H1 (cell line): ENCODE measurements at regions of chr1 and their contacts with region 1.

Region 1: GRCh38 chr1:109773146-109773899 is 9.6 kb upstream of the EPS8L3 start:
- DNase-seq: peak; percentile 34 to 66
- H3K4me3 ChIP-seq: no peak overlapping the region
- H3K27ac ChIP-seq: no peak overlapping the region
- H3K4me1 ChIP-seq: peaks cover 0 to 4% (median 0%) of the 10 kb centered on the region in 4 experiments; a peak in 1 of 7 replicates
- H3K27me3 ChIP-seq: no peaks in the 10 kb centered on the region; a peak in 2 of 7 replicates
- CTCF ChIP-seq: peak; percentile 93 to 97 (median 95)
- EP300 ChIP-seq: no peak
- POLR2A ChIP-seq: no peak
- RAD21 ChIP-seq: peak; percentile 97

Region 2: GRCh38 chr1:109655601-109656519 is 117.5 kb before region 1 on chr1 and contains the start of gene GSTM4:
- CTCF ChIA-PET with region 1: interaction called, 51 read pairs
- POLR2A ChIA-PET with region 1: no interaction called
- DNase-seq: peak; percentile 44 to 86
- H3K4me3 ChIP-seq: peak within 1 kb of the TSS; percentile 59 to 74 (median 66)
- H3K27ac ChIP-seq: no peak within 1 kb of the TSS
- H3K4me1 ChIP-seq: 0 out of 7 replicates have a peak, but pooled peaks cover 0 to 3% (median 0%) of the 10 kb centered on the region in 4 experiments
- H3K27me3 ChIP-seq: peaks cover 0 to 5% (median 4%) of the 10 kb centered on the region in 4 experiments; a peak in 6 of 7 replicates
- CTCF ChIP-seq: no peak; a peak in 1 of 4 replicates
- EP300 ChIP-seq: 0 out of 3 replicates have a peak, but pooled peaks of 1 of the 2 experiments have one; percentile 22
- POLR2A ChIP-seq: peak in 1 of 2 experiments; percentile 32; a peak in 1 of 3 replicates
- RAD21 ChIP-seq: no peak; a peak in 1 of 4 replicates
- total RNA-seq, gene GSTM4: 11.3 and 18.7 TPM in 2 replicates

Region 3: GRCh38 chr1:109677459-109677858 is 95.9 kb before region 1 on chr1:
- CTCF ChIA-PET with region 1: no interaction called
- POLR2A ChIA-PET with region 1: no interaction called
- DNase-seq: no peak
- H3K4me3 ChIP-seq: no peak overlapping the region
- H3K27ac ChIP-seq: no peak overlapping the region
- H3K4me1 ChIP-seq: no peaks in the 10 kb centered on the region
- H3K27me3 ChIP-seq: no peaks in the 10 kb centered on the region
- CTCF ChIP-seq: no peak
- EP300 ChIP-seq: no peak
- POLR2A ChIP-seq: no peak
- RAD21 ChIP-seq: no peak

Region 4: GRCh38 chr1:109762821-109763645 is 10.3 kb before region 1 on chr1:
- CTCF ChIA-PET with region 1: interaction called, 43 read pairs
- POLR2A ChIA-PET with region 1: no interaction called
- DNase-seq: no peak
- H3K4me3 ChIP-seq: no peak overlapping the region
- H3K27ac ChIP-seq: no peak overlapping the region
- H3K4me1 ChIP-seq: no peaks in the 10 kb centered on the region; a peak in 1 of 7 replicates
- H3K27me3 ChIP-seq: no peaks in the 10 kb centered on the region
- CTCF ChIP-seq: no peak
- EP300 ChIP-seq: no peak
- POLR2A ChIP-seq: no peak
- RAD21 ChIP-seq: no peak

Region 5: GRCh38 chr1:109877320-109877771 is 104.0 kb after region 1 on chr1:
- CTCF ChIA-PET with region 1: interaction called, 13 read pairs
- POLR2A ChIA-PET with region 1: interaction called, 3 read pairs
- DNase-seq: peak; percentile 49 to 70
- H3K4me3 ChIP-seq: peak overlapping the region in 2 of 4 experiments; percentile 3 to 18; a peak in 2 of 8 replicates
- H3K27ac ChIP-seq: peak overlapping the region; percentile 77; the same call in 1 of the 2 replicates
- H3K4me1 ChIP-seq: peaks cover 9 to 33% (median 12%) of the 10 kb centered on the region in 4 experiments
- H3K27me3 ChIP-seq: no peaks in the 10 kb centered on the region
- CTCF ChIP-seq: peak; percentile 18 to 32 (median 21); a peak in 3 of 4 replicates
- EP300 ChIP-seq: no peak
- POLR2A ChIP-seq: peak in 1 of 2 experiments; percentile 62; a peak in 2 of 3 replicates
- RAD21 ChIP-seq: peak; percentile 13 to 41

Region 6: GRCh38 chr1:109917768-109918606 is 144.7 kb after region 1 on chr1:
- CTCF ChIA-PET with region 1: interaction called, 113 read pairs
- POLR2A ChIA-PET with region 1: no interaction called
- DNase-seq: no peak
- H3K4me3 ChIP-seq: no peak overlapping the region
- H3K27ac ChIP-seq: no peak overlapping the region
- H3K4me1 ChIP-seq: no peaks in the 10 kb centered on the region
- H3K27me3 ChIP-seq: no peaks in the 10 kb centered on the region; a peak in 1 of 7 replicates
- CTCF ChIP-seq: peak; percentile 8 to 41 (median 24); a peak in 2 of 4 replicates
- EP300 ChIP-seq: no peak
- POLR2A ChIP-seq: no peak
- RAD21 ChIP-seq: no peak; a peak in 1 of 4 replicates

Region 7: DNA sequence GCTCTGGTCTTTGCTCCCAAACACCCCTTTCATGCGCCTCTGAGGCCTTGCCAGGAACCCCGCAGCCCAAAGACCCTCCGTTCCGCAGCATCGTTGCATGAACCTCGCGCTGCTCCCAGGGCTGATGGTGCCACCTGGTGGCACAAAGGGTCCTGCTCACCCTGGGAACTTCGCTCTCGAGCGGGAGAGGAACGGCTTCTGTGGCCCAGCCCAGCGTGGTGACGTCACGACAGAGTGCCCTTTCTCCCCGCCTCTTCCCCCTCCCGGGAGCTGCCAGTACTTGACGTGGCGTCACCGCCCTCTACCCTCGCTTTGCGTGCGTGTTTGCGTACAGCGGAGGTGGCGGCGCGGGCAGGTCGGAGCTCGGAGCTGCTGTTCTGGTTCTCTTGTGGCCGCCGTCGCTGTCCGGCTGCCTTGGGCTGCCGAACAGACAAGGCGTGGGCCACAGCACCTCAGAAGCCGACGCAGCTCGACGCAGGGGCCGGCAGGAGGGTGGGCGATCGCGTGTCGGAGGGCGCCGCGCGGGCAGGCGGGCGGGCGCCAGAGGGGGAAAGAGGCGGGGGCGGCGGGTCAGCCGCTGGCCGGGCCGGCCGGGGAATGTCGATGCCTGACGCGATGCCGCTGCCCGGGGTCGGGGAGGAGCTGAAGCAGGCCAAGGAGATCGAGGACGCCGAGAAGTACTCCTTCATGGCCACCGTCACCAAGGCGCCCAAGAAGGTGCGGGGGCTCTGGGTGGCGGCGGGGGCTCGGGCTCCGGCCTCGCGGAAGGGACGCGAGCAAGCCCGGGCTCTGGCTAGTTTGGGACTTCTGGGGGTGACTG is 211.3 kb after region 1 on chr1 and contains the start of gene AHCYL1:
- CTCF ChIA-PET with region 1: interaction called, 700 read pairs
- POLR2A ChIA-PET with region 1: interaction called, 14 read pairs
- DNase-seq: peak; percentile 97
- H3K4me3 ChIP-seq: peak within 1 kb of the TSS; percentile 40 to 82 (median 78)
- H3K27ac ChIP-seq: peak within 1 kb of the TSS; percentile 86
- H3K4me1 ChIP-seq: peaks cover 4 to 12% (median 9%) of the 10 kb centered on the region in 4 experiments; a peak in 6 of 7 replicates
- H3K27me3 ChIP-seq: no peaks in the 10 kb centered on the region
- CTCF ChIP-seq: peak; percentile 94 to 98 (median 96)
- EP300 ChIP-seq: no peak
- POLR2A ChIP-seq: peak; percentile 82 to 86
- RAD21 ChIP-seq: peak; percentile 99
- total RNA-seq, gene AHCYL1: 92.5 and 95.9 TPM in 2 replicates